ENCODE measurements at regions of chr17 and their contacts with region 1.

Region 1: GRCh38 chr17:50087912-50088405 is 7.2 kb upstream of the PDK2 start:
- DNase-seq: no peak
- H3K4me3 ChIP-seq: no peak overlapping the region
- H3K27ac ChIP-seq: no peak overlapping the region
- H3K4me1 ChIP-seq: no peaks in the 10 kb centered on the region
- H3K27me3 ChIP-seq: no peaks in the 10 kb centered on the region
- CTCF ChIP-seq: no peak
- POLR2A ChIP-seq: no peak

Region 2: GRCh38 chr17:50026901-50027630 is 60.9 kb before region 1 on chr17:
- intact Hi-C with region 1: loop called (anchors 2 kb)
- DNase-seq: peak; percentile 88 to 90
- H3K4me3 ChIP-seq: no peak overlapping the region
- H3K27ac ChIP-seq: peak overlapping the region in 2 of 3 donors; percentile 59 to 84
- H3K4me1 ChIP-seq: peaks cover 28 to 35% of the 10 kb centered on the region in 2 donors
- H3K27me3 ChIP-seq: no peaks in the 10 kb centered on the region
- CTCF ChIP-seq: peak; percentile 91 to 96 (median 94)
- POLR2A ChIP-seq: no peak

Region 3: GRCh38 chr17:50129728-50130558 is 42.0 kb after region 1 on chr17 and contains the start of gene SAMD14:
- intact Hi-C with region 1: no loop called
- DNase-seq: no peak
- H3K4me3 ChIP-seq: peak within 1 kb of the TSS in 1 of 3 donors; percentile 32
- H3K27ac ChIP-seq: no peak within 1 kb of the TSS
- H3K4me1 ChIP-seq: peaks cover 12 to 24% of the 10 kb centered on the region in 2 donors
- H3K27me3 ChIP-seq: peaks cover 5% of the 10 kb centered on the region
- CTCF ChIP-seq: no peak
- POLR2A ChIP-seq: no peak
- total RNA-seq, gene SAMD14: 0.24 to 0.81 (median 0.58) TPM

Measured in thyroid gland (tissue), 4 donors.